Motor neuron (in vitro differentiated cells): ENCODE measurements at regions of chr2 and their contacts with region 1.

Region 1: GRCh38 chr2:43773876-43774613 is at the start of gene DYNC2LI1:
- ATAC-seq: peak; percentile 99 to 100 (median 100)
- H3K4me3 ChIP-seq: peak within 1 kb of the TSS; percentile 51 to 87 (median 57)
- H3K27ac ChIP-seq: peak within 1 kb of the TSS; percentile 43 to 72
- H3K4me1 ChIP-seq: peaks cover 0 to 3% of the 10 kb centered on the region in 2 donors
- total RNA-seq, gene DYNC2LI1: 20.3 to 56.0 (median 32.4) TPM

Region 2: DNA sequence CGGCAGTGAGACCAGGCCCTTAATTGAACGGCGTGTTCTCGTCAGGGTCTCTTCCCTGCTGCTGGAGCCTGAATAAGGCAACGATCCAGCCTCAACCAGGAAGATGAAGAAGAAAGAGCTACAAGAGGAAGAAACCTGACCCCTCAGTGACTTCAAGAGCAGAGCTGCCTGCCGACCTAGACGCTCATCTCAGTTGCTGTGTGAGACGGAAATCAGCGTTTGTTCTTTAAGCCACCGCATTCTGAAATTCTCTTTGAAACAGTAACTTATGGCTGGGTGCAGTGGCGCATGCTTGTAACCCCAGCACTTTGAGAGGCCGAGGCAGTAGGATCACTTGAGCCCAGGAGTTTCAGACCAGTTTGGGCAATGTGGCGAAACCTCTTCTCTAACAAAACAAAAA is 1250.7 kb before region 1 on chr2:
- in situ Hi-C with region 1: no loop called
- ATAC-seq: no peak
- H3K4me3 ChIP-seq: no peak overlapping the region
- H3K27ac ChIP-seq: no peak overlapping the region
- H3K4me1 ChIP-seq: no peaks in the 10 kb centered on the region

Region 3: DNA sequence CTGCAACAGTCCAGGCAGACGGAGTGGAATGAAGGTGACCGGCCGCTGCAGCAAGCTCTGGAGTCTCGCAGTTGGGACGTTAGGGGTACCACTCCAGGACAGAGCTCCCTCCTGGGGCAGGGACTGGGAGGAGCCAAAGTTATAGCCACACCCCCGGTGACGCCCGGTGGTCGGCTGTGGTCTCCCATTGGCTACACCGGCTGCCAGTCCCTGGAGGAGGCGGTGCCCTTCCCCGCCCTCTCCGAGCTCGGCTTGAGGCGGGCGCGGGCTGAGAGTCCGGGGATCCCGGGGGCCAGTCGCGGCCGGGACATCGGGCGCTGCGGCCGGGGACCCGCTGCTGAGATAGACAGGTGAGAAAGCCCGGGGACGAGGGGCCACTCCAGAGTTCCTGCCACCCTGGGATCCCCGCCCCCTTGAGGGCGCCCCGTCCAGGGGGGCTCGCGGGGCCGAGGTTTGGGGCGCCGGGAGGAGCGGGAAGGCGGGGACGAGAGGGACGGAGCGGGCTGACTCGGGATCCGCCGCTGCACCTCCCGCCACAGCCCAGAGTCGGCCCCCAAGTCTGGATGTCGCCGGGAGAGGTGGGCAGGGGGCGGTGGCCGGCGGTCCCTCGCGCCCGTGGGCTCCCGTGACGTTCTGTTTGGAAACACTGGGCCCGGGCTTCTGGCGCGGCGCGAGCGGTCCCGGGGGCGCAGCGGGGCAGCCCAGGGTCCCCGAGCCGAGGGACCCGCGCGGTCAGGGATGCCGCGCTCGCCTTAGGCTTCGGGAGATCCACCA is 136.8 kb before region 1 on chr2 and contains the start of gene PLEKHH2:
- in situ Hi-C with region 1: loop called in 1 of 9 experiments (anchors 25 kb)
- ATAC-seq: peak; percentile 94 to 99 (median 98)
- H3K4me3 ChIP-seq: peak within 1 kb of the TSS; percentile 55 to 97 (median 69)
- H3K27ac ChIP-seq: no peak within 1 kb of the TSS
- H3K4me1 ChIP-seq: no peaks in the 10 kb centered on the region
- total RNA-seq, gene PLEKHH2: 1.0 to 57.4 (median 2.8) TPM